Activated T-helper 2 cell treated with anti-CD3 and anti-CD28 coated beads, Interferon-gamma antibody, Interleukin-2, Interleukin-4, amounts not matched to agents 10 μg/mL and 5 μg/mL and 100 μg/mL, durations not matched to agents 14 hours and 24 hours and 36 hours (primary cell): ENCODE measurements at regions of chr6 and their contacts with region 1.

Region 1: DNA sequence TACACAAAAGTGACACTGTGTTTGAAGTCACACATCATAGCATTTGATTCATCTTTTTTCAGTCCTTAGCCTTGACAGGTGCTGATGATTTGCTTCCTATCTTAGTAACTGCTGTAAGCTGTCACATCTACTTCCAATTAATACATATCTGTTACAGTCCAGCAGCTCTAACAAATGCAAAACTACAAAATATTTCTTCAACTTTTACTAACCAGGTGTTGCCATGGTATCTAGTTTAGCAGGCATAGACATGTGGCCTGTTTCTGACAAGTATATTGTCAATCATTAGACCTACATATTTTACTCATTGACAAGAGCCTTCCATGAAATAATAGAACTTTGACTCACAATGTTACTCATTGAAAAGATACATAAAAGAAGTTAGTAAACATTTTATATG is 1159.7 kb downstream of the GRIK2 start:
- DNase-seq: no peak
- H3K4me3 Mint-ChIP-seq: no peak overlapping the region
- H3K27ac Mint-ChIP-seq: no peak overlapping the region
- H3K4me1 Mint-ChIP-seq: no peaks in the 10 kb centered on the region
- H3K27me3 Mint-ChIP-seq: no peaks in the 10 kb centered on the region

Region 2: GRCh38 chr6:102571236-102571908 is 18.2 kb after region 1 on chr6:
- intact Hi-C with region 1: no loop called
- DNase-seq: no peak
- H3K4me3 Mint-ChIP-seq: no peak overlapping the region
- H3K27ac Mint-ChIP-seq: no peak overlapping the region
- H3K4me1 Mint-ChIP-seq: no peaks in the 10 kb centered on the region
- H3K27me3 Mint-ChIP-seq: no peaks in the 10 kb centered on the region

Region 3: GRCh38 chr6:103062136-103062535 is 508.9 kb after region 1 on chr6:
- intact Hi-C with region 1: loop called (anchors 5 kb)
- DNase-seq: no peak
- H3K4me3 Mint-ChIP-seq: no peak overlapping the region
- H3K27ac Mint-ChIP-seq: no peak overlapping the region
- H3K4me1 Mint-ChIP-seq: no peaks in the 10 kb centered on the region
- H3K27me3 Mint-ChIP-seq: no peaks in the 10 kb centered on the region

Region 4: GRCh38 chr6:103511576-103511975 is 958.4 kb after region 1 on chr6:
- intact Hi-C with region 1: no loop called
- DNase-seq: no peak
- H3K4me3 Mint-ChIP-seq: no peak overlapping the region
- H3K27ac Mint-ChIP-seq: no peak overlapping the region
- H3K4me1 Mint-ChIP-seq: no peaks in the 10 kb centered on the region
- H3K27me3 Mint-ChIP-seq: no peaks in the 10 kb centered on the region